ENCODE measurements at regions of chr3 and their contacts with region 1.

Region 1: GRCh38 chr3:87145553-87145952 is 81.6 kb upstream of the CHMP2B start:
- DNase-seq: peak; percentile 36
- ATAC-seq: peak; percentile 30
- H3K4me3 Mint-ChIP-seq: no peak overlapping the region
- H3K27ac Mint-ChIP-seq: no peak overlapping the region
- H3K4me1 Mint-ChIP-seq: no peaks in the 10 kb centered on the region
- H3K27me3 Mint-ChIP-seq: no peaks in the 10 kb centered on the region
- CTCF ChIP-seq: peak; percentile 24

Region 2: DNA sequence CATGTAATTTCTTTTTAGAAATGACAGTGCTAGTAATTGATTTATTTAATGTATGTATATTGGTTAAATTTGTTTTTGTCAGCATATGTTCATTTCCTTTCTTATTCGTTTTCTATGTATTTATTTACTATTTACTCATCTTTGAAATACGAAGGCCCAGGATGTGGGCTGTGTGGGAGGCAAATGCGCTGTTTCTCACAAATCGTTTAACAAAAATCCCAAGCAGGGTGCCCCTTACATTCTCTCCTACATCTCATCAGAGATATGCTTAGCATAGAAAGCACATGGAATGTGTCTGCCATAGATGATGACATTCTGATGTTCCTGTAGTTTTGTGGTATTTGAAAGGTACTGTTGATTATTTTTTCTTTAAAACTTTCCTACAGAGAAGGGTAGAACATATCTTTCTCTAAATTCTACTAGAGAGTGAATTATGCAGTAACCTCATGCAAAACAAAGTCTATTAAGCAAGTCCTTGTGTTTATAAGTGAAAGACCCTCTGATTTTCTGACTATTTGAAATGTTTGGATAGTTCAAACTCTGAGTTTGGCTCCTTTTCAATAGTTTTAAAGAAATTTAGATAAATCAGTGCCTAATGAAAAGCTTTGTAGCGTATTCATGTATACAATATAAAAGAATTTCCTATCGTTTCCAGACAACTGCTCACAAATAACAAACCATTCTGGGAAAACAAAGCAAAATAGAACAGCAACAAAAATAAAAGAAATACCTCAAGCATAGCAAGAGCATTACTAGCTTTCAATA is 43.5 kb before region 1 on chr3:
- CTCF ChIA-PET with region 1: no interaction called
- POLR2A ChIA-PET with region 1: no interaction called
- intact Hi-C with region 1: loop called (anchors 2 kb)
- DNase-seq: no peak
- ATAC-seq: no peak
- H3K4me3 Mint-ChIP-seq: no peak overlapping the region
- H3K27ac Mint-ChIP-seq: no peak overlapping the region
- H3K4me1 Mint-ChIP-seq: no peaks in the 10 kb centered on the region
- H3K27me3 Mint-ChIP-seq: no peaks in the 10 kb centered on the region
- CTCF ChIP-seq: no peak

Region 3: DNA sequence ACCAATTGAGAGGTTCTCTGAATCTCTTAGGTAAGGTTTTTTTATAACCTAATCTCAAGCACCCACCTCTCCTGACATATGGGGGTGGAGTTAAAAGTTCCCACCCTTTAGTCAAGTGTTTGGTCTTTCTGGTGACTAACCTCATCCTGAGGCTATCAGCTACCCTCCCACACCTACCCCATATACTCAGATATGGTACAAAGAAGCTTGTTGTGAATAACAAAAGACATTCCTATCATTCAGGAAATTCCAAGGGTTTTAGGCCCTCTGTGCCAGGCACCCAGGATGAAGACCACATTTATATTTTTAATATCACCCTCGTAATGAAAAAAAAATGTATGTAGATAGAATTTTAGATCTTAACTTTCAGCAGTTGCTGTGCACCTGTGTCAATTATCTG is 90.5 kb after region 1 on chr3:
- CTCF ChIA-PET with region 1: no interaction called
- POLR2A ChIA-PET with region 1: no interaction called
- intact Hi-C with region 1: no loop called
- DNase-seq: no peak
- ATAC-seq: no peak
- H3K4me3 Mint-ChIP-seq: no peak overlapping the region
- H3K27ac Mint-ChIP-seq: no peak overlapping the region
- H3K4me1 Mint-ChIP-seq: peaks cover 23% of the 10 kb centered on the region
- H3K27me3 Mint-ChIP-seq: no peaks in the 10 kb centered on the region
- CTCF ChIP-seq: no peak